ENCODE measurements at regions of chr5 and their contacts with region 1.

Region 1: DNA sequence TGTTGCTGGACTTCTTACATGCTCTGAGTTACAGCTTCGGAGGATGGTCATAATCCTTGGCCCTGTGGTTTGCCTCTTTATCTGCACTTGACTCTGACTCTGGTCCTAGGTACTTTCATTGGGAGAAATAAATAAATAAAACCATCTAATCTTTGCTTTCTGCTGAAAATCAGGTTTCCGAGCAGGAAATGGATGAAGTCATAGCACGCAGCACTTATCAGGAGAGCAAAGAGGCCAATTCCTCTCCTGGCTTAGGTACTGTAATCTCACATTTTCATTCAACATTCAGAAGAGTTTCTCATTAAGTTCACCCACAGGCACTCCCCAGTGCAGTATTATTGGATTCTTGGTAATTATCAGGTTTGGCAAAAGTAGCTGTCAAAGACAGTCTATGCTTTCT is 104.7 kb downstream of the GOLPH3 start:
- DNase-seq: no peak
- ATAC-seq: no peak
- H3K4me3 ChIP-seq: no peak overlapping the region
- H3K27ac ChIP-seq: no peak overlapping the region
- H3K4me1 ChIP-seq: no peaks in the 10 kb centered on the region
- H3K27me3 ChIP-seq: no peaks in the 10 kb centered on the region
- CTCF ChIP-seq: no peak
- EP300 ChIP-seq: no peak
- POLR2A ChIP-seq: no peak
- RAD21 ChIP-seq: no peak

Region 2: GRCh38 chr5:31972558-31972957 is 96.8 kb before region 1 on chr5:
- CTCF ChIA-PET with region 1: no interaction called
- POLR2A ChIA-PET with region 1: no interaction called
- RAD21 ChIA-PET with region 1: no interaction called
- SMC1A ChIA-PET with region 1: no interaction called
- in situ Hi-C with region 1: no loop called
- intact Hi-C with region 1: loop called (anchors 5 kb)
- DNase-seq: no peak
- ATAC-seq: no peak
- H3K4me3 ChIP-seq: no peak overlapping the region
- H3K27ac ChIP-seq: no peak overlapping the region
- H3K4me1 ChIP-seq: no peaks in the 10 kb centered on the region
- H3K27me3 ChIP-seq: no peaks in the 10 kb centered on the region
- CTCF ChIP-seq: no peak
- EP300 ChIP-seq: no peak
- POLR2A ChIP-seq: no peak
- RAD21 ChIP-seq: no peak

Measured in GM12878 (cell line).